B cell (primary cell): ENCODE measurements at regions of chr15 and their contacts with region 1.

Region 1: DNA sequence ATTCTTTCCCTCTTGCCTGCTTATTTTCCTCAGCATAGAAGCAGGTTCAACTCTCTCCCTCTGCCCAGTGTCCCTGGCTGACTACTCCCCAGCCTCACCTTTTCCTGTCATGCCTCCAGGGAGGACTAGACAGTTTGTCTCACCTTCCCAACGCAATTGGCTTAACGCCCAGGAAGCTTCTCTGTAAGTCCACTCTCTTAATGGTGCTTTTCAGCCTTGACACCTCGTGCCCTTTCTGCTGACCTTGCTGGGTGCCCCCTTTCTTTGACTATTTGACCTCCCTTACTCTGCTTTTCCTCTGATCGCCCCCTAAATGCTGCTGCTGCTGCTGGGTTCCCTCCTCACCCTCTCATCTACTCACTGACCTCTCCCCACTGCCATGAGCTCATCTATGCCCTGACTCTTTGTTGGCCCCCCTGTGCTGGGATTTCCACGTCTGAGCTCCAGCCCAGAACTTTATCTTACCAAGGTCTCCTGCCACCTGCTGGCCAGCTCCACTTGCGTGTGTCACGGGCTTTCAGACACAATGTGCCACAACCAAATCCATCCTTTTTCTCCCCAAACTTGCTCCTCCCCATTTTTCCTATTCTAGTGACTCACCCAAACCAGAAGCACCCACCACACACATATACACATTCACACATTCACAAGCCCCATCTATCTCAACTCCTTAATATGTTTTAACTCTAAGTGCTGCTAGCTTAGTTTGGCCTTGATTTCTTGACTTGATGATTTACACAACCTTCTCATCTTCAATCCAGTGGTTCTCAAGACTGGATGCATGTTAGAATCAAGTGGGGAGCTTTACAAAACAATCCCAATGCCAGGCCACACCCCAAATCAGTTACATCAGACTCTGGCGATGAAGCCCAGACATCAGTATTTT is 16.6 kb downstream of the EPB42 start:
- DNase-seq: peak; percentile 55
- ATAC-seq: peak; percentile 64
- H3K4me3 ChIP-seq: no peak overlapping the region
- H3K4me3 Mint-ChIP-seq: no peak overlapping the region
- H3K27ac ChIP-seq: no peak overlapping the region
- H3K27ac Mint-ChIP-seq: no peak overlapping the region
- H3K4me1 ChIP-seq: no peaks in the 10 kb centered on the region
- H3K4me1 Mint-ChIP-seq: peaks cover 6% of the 10 kb centered on the region
- H3K27me3 ChIP-seq: peaks cover 0 to 4% (median 1%) of the 10 kb centered on the region in 4 experiments
- H3K27me3 Mint-ChIP-seq: peaks cover 16% of the 10 kb centered on the region
- CTCF ChIP-seq: peak; percentile 68

Region 2: GRCh38 chr15:42691308-42691707 is 513.0 kb before region 1 on chr15:
- CTCF ChIA-PET with region 1: no interaction called
- POLR2A ChIA-PET with region 1: no interaction called
- intact Hi-C with region 1: no loop called
- DNase-seq: no peak
- ATAC-seq: no peak
- H3K4me3 ChIP-seq: no peak overlapping the region
- H3K4me3 Mint-ChIP-seq: no peak overlapping the region
- H3K27ac ChIP-seq: no peak overlapping the region
- H3K27ac Mint-ChIP-seq: no peak overlapping the region
- H3K4me1 ChIP-seq: no peaks in the 10 kb centered on the region
- H3K4me1 Mint-ChIP-seq: no peaks in the 10 kb centered on the region
- H3K27me3 ChIP-seq: no peaks in the 10 kb centered on the region
- H3K27me3 Mint-ChIP-seq: no peaks in the 10 kb centered on the region
- CTCF ChIP-seq: no peak

Region 3: GRCh38 chr15:42914728-42915497 is 289.3 kb before region 1 on chr15:
- CTCF ChIA-PET with region 1: no interaction called
- POLR2A ChIA-PET with region 1: no interaction called
- intact Hi-C with region 1: no loop called
- DNase-seq: no peak
- ATAC-seq: no peak
- H3K4me3 ChIP-seq: no peak overlapping the region
- H3K4me3 Mint-ChIP-seq: no peak overlapping the region
- H3K27ac ChIP-seq: no peak overlapping the region
- H3K27ac Mint-ChIP-seq: no peak overlapping the region
- H3K4me1 ChIP-seq: peaks cover 12 to 18% of the 10 kb centered on the region in 2 donors
- H3K4me1 Mint-ChIP-seq: peaks cover 39% of the 10 kb centered on the region
- H3K27me3 ChIP-seq: no peaks in the 10 kb centered on the region
- H3K27me3 Mint-ChIP-seq: no peaks in the 10 kb centered on the region
- CTCF ChIP-seq: no peak

Region 4: GRCh38 chr15:43185157-43186017 is 18.9 kb before region 1 on chr15 and contains the start of gene CCNDBP1:
- CTCF ChIA-PET with region 1: interaction called, 11 read pairs
- POLR2A ChIA-PET with region 1: no interaction called
- intact Hi-C with region 1: loop called (anchors 2 kb)
- DNase-seq: peak; percentile 92
- ATAC-seq: peak; percentile 93
- H3K4me3 ChIP-seq: peak within 1 kb of the TSS; percentile 43 to 94 (median 75)
- H3K4me3 Mint-ChIP-seq: peak within 1 kb of the TSS; percentile 99
- H3K27ac ChIP-seq: peak within 1 kb of the TSS; percentile 87 to 94
- H3K27ac Mint-ChIP-seq: peak within 1 kb of the TSS; percentile 98
- H3K4me1 ChIP-seq: peaks cover 21 to 32% of the 10 kb centered on the region in 2 donors
- H3K4me1 Mint-ChIP-seq: peaks cover 38% of the 10 kb centered on the region
- H3K27me3 ChIP-seq: no peaks in the 10 kb centered on the region
- H3K27me3 Mint-ChIP-seq: no peaks in the 10 kb centered on the region
- CTCF ChIP-seq: peak; percentile 67
- total RNA-seq, gene CCNDBP1: 113 and 116 TPM in 2 replicates